WTC11 (cell line): ENCODE measurements at regions of chr5 and their contacts with region 1.

Region 1: GRCh38 chr5:142888469-142889085 is 118.4 kb downstream of the ARHGAP26 start:
- DNase-seq: no peak
- ATAC-seq: peak; percentile 79
- H3K4me3 Mint-ChIP-seq: no peak overlapping the region
- H3K27ac Mint-ChIP-seq: peak overlapping the region; percentile 55
- H3K4me1 Mint-ChIP-seq: peaks cover 37% of the 10 kb centered on the region
- H3K27me3 Mint-ChIP-seq: no peaks in the 10 kb centered on the region
- CTCF ChIP-seq: peak; percentile 70

Region 2: DNA sequence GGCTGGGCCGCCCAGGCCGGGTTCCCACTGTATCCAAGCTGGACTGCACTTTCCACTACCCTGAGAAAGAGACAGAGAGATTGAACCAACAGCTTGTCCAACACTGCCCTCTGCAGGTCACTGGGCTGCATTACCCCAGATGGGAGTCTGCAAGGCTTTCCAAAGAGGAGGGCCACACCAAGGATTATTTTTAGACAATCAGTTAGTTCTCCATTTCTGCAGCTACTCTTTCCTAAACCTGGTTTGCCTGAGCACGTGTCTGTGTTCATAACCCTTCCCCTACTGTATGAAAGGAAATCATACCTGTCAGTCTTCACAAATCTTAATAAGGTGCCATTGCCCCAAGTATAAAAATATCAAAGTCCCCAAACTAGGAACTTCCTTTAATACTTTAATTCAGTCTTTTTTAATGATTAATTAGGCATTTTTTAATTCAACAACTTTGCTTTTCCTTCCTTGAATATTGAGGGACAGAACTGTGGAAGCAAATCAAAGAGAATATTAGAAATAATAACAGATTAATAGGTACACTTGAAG is 189.3 kb before region 1 on chr5:
- CTCF ChIA-PET with region 1: interaction called, 13 read pairs
- POLR2A ChIA-PET with region 1: no interaction called
- DNase-seq: peak; percentile 94
- ATAC-seq: peak; percentile 75
- H3K4me3 Mint-ChIP-seq: no peak overlapping the region
- H3K27ac Mint-ChIP-seq: no peak overlapping the region
- H3K4me1 Mint-ChIP-seq: peaks cover 59% of the 10 kb centered on the region
- H3K27me3 Mint-ChIP-seq: no peaks in the 10 kb centered on the region
- CTCF ChIP-seq: peak; percentile 90

Region 3: DNA sequence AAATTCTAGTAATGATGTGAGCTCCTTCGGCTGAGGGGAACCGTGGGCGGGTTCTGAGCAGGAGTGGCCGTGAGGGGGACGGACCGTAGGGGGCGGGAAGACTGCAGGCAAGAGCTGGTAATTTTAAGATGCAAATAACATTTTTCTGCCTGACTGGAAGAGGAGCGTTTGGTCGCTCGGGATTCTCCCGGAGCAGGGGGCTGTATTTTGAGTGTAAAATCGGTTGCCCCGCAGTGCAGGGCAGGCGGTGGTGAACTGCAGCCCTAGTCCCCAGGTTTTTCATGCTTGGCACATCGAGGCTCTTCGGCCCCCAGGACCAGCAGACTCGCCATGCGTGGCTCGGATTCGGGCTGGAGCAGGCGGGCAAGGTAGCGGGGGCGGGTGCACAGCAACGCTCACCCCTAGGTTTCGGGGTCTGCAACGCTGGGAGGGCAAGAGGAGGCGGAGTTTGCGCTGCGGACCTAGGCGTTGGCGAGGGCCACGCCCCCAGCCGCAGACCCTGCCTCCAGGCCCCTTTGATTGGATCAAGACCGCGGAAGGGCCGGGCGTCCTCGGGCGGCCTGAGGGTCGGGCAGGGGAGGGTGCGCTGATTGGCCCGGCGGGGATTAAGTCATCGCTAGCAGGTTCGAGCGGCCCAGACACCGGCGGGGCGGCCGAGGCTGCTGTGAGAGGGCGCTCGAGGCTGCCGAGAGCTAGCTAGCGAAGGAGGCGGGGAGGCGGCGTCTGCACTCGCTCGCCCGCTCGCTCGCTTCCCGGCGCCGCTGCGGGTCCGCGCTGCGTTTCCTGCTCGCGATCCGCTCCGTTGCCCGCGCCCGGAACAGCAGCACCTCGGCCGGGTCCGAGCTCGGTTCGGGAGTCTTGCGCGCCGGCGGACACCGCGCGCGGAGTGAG is 118.6 kb before region 1 on chr5 and contains the start of gene ARHGAP26:
- CTCF ChIA-PET with region 1: interaction called, 16 read pairs
- POLR2A ChIA-PET with region 1: interaction called, 4 read pairs
- DNase-seq: peak; percentile 98
- ATAC-seq: peak; percentile 96
- H3K4me3 Mint-ChIP-seq: peak within 1 kb of the TSS; percentile 93
- H3K27ac Mint-ChIP-seq: peak within 1 kb of the TSS; percentile 90
- H3K4me1 Mint-ChIP-seq: peaks cover 36% of the 10 kb centered on the region
- H3K27me3 Mint-ChIP-seq: peaks cover 12% of the 10 kb centered on the region; the same call in 1 of the 2 replicates
- CTCF ChIP-seq: no peak
- total RNA-seq, gene ARHGAP26: 19.1 to 22.3 TPM (median 21.8 TPM) in 3 replicates

Region 4: GRCh38 chr5:142874537-142874936 is 14.0 kb before region 1 on chr5:
- CTCF ChIA-PET with region 1: interaction called, 21 read pairs
- POLR2A ChIA-PET with region 1: no interaction called
- DNase-seq: no peak
- ATAC-seq: no peak
- H3K4me3 Mint-ChIP-seq: no peak overlapping the region
- H3K27ac Mint-ChIP-seq: no peak overlapping the region
- H3K4me1 Mint-ChIP-seq: peaks cover 47% of the 10 kb centered on the region
- H3K27me3 Mint-ChIP-seq: no peaks in the 10 kb centered on the region
- CTCF ChIP-seq: no peak

Region 5: DNA sequence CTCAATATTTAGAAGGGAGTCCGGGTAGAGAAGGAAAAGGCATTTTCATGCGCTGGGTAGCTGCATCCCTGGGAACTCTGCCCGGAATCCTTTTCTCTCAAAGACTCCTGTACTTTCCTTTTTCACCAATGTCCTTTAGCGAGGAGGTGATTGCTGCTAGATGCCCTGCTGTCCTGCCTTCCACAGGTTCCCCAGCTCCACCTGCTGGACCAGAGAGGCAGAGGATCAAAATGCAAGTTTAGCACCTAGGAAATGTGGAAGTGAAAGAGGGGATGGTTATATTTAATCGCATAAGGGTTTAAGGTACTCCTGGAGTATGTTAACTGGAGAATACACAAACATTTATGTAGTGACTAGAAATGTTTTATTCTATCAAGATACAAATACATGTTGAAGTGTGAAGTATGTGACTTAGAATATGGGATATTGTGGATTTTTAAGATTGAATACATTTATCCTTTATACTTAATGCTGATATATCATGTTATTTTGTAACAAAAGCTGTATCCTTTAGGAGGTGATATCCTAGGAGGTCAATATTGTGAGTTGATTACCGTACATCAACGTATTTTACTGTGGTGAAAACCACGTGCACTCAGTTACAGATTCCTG is 27.3 kb after region 1 on chr5:
- CTCF ChIA-PET with region 1: interaction called, 19 read pairs
- POLR2A ChIA-PET with region 1: no interaction called
- DNase-seq: peak; percentile 70
- ATAC-seq: peak; percentile 92
- H3K4me3 Mint-ChIP-seq: no peak overlapping the region
- H3K27ac Mint-ChIP-seq: peak overlapping the region; percentile 94; the same call in 1 of the 2 replicates
- H3K4me1 Mint-ChIP-seq: peaks cover 14% of the 10 kb centered on the region
- H3K27me3 Mint-ChIP-seq: no peaks in the 10 kb centered on the region
- CTCF ChIP-seq: peak; percentile 52; the same call in 1 of the 2 replicates

Region 6: GRCh38 chr5:143119291-143119769 is 230.8 kb after region 1 on chr5:
- CTCF ChIA-PET with region 1: no interaction called
- POLR2A ChIA-PET with region 1: no interaction called
- DNase-seq: no peak
- ATAC-seq: no peak
- H3K4me3 Mint-ChIP-seq: no peak overlapping the region
- H3K27ac Mint-ChIP-seq: peak overlapping the region; percentile 52; the same call in 1 of the 2 replicates
- H3K4me1 Mint-ChIP-seq: peaks cover 42% of the 10 kb centered on the region
- H3K27me3 Mint-ChIP-seq: no peaks in the 10 kb centered on the region
- CTCF ChIP-seq: no peak